Ascending aorta (tissue), 2 donors: ENCODE measurements at regions of chr10 and their contacts with region 1.

Region 1: GRCh38 chr10:4051011-4051640 is 266.1 kb upstream of the KLF6 start:
- DNase-seq: peak in 1 of 2 donors; percentile 81
- H3K4me3 ChIP-seq: peak overlapping the region; percentile 41 to 45
- H3K27ac ChIP-seq: peak overlapping the region; percentile 86 to 93
- H3K4me1 ChIP-seq: peaks cover 3 to 22% of the 10 kb centered on the region in 2 donors
- H3K27me3 ChIP-seq: no peaks in the 10 kb centered on the region
- CTCF ChIP-seq: no peak

Region 2: GRCh38 chr10:3668276-3668965 is 382.7 kb before region 1 on chr10:
- intact Hi-C with region 1: no loop called
- DNase-seq: no peak
- H3K4me3 ChIP-seq: no peak overlapping the region
- H3K27ac ChIP-seq: no peak overlapping the region
- H3K4me1 ChIP-seq: no peaks in the 10 kb centered on the region
- H3K27me3 ChIP-seq: no peaks in the 10 kb centered on the region
- CTCF ChIP-seq: no peak

Region 3: DNA sequence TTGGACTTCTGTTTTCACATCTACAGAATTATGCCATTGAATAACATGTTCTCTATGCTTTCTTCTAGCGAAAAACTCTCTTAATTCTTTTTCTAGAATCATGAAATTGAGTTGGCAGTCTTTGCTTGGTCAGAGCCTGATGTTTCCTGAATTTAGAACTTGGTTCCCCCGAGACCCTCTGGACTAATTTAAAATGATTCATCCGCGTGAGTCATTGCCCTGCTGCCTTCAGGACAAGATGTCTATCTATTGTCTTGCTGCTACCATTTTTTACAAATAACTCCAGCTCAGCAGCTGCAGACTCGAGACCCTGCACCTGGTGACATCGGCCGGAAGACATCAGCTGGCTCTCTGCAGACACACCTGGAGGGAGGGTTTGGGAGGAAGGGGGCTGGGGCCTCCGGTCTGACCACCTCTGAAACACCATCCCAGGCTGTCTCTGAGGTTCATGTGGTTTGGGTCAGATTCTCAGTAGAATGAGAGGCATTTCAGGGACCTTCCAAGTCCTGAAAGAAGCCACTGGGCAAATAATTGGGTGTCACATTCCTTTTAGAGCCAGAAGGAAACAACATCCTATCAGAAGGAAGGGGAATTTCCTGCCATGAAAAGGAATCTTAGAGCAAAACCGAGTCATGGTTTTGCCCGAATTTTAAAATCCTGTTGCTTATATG is 245.2 kb before region 1 on chr10:
- intact Hi-C with region 1: loop called (anchors 5 kb)
- DNase-seq: peak; percentile 55 to 82
- H3K4me3 ChIP-seq: peak overlapping the region in 1 of 2 donors; percentile 23
- H3K27ac ChIP-seq: peak overlapping the region; percentile 88 to 92
- H3K4me1 ChIP-seq: peaks cover 20 to 50% of the 10 kb centered on the region in 2 donors
- H3K27me3 ChIP-seq: no peaks in the 10 kb centered on the region
- CTCF ChIP-seq: no peak

Region 4: GRCh38 chr10:3942937-3943489 is 108.1 kb before region 1 on chr10:
- intact Hi-C with region 1: loop called (anchors 5 kb)
- DNase-seq: no peak
- H3K4me3 ChIP-seq: no peak overlapping the region
- H3K27ac ChIP-seq: peak overlapping the region; percentile 78 to 86
- H3K4me1 ChIP-seq: peaks cover 3 to 14% of the 10 kb centered on the region in 2 donors
- H3K27me3 ChIP-seq: no peaks in the 10 kb centered on the region
- CTCF ChIP-seq: no peak

Region 5: GRCh38 chr10:4131407-4132228 is 80.5 kb after region 1 on chr10:
- intact Hi-C with region 1: loop called (anchors 5 kb)
- DNase-seq: no peak
- H3K4me3 ChIP-seq: no peak overlapping the region
- H3K27ac ChIP-seq: peak overlapping the region; percentile 70 to 73
- H3K4me1 ChIP-seq: peaks cover 9 to 17% of the 10 kb centered on the region in 2 donors
- H3K27me3 ChIP-seq: no peaks in the 10 kb centered on the region
- CTCF ChIP-seq: no peak

Region 6: DNA sequence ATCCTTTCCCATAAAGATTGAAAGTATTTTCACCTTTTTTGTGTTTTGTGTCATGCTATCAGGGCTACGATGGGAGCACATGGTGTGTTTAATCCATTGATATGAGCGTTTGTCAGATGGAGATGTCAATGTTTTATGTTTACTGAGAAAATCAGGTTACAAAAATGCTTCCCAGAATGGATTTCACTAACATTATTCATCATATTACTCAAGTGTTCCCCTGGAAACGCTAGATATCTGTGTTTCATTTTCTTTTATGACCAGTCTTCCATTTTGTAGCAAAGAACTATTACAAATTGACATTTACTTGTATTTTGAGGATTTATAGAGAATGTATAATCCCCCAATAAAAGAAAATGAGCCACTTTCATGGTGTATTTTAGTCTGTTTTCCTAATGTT is 481.3 kb after region 1 on chr10:
- intact Hi-C with region 1: loop called (anchors 10 kb)
- DNase-seq: no peak
- H3K4me3 ChIP-seq: no peak overlapping the region
- H3K27ac ChIP-seq: peak overlapping the region; percentile 22 to 42
- H3K4me1 ChIP-seq: peaks cover 0 to 4% of the 10 kb centered on the region in 2 donors
- H3K27me3 ChIP-seq: no peaks in the 10 kb centered on the region
- CTCF ChIP-seq: no peak